CD14-positive monocyte (primary cell): ENCODE measurements at regions of chr2 and their contacts with region 1.

Region 1: GRCh38 chr2:240021488-240022104 is 3.5 kb downstream of the NDUFA10 start:
- DNase-seq: peak; percentile 51 to 65 (median 61)
- H3K4me3 ChIP-seq: no peak overlapping the region
- H3K4me3 Mint-ChIP-seq: no peak overlapping the region
- H3K27ac ChIP-seq: no peak overlapping the region
- H3K27ac Mint-ChIP-seq: peak overlapping the region in 1 of 7 donors; percentile 45
- H3K4me1 ChIP-seq: peaks cover 13 to 15% of the 10 kb centered on the region in 2 donors
- H3K4me1 Mint-ChIP-seq: peaks cover 16% of the 10 kb centered on the region
- H3K27me3 ChIP-seq: no peaks in the 10 kb centered on the region
- H3K27me3 Mint-ChIP-seq: peaks cover 0 to under 1% (median 0%) of the 10 kb centered on the region in 3 donors
- CTCF ChIP-seq: peak; percentile 84

Region 2: GRCh38 chr2:239892441-239893235 is 129.0 kb before region 1 on chr2:
- intact Hi-C with region 1: no loop called
- DNase-seq: no peak
- H3K4me3 ChIP-seq: no peak overlapping the region
- H3K4me3 Mint-ChIP-seq: no peak overlapping the region
- H3K27ac ChIP-seq: no peak overlapping the region
- H3K27ac Mint-ChIP-seq: peak overlapping the region in 3 of 7 donors; percentile 6 to 59 (median 15)
- H3K4me1 ChIP-seq: peaks cover 37 to 42% of the 10 kb centered on the region in 2 donors
- H3K4me1 Mint-ChIP-seq: peaks cover 50% of the 10 kb centered on the region
- H3K27me3 ChIP-seq: no peaks in the 10 kb centered on the region
- H3K27me3 Mint-ChIP-seq: peaks cover 5 to 15% (median 12%) of the 10 kb centered on the region in 3 donors
- CTCF ChIP-seq: no peak

Region 3: DNA sequence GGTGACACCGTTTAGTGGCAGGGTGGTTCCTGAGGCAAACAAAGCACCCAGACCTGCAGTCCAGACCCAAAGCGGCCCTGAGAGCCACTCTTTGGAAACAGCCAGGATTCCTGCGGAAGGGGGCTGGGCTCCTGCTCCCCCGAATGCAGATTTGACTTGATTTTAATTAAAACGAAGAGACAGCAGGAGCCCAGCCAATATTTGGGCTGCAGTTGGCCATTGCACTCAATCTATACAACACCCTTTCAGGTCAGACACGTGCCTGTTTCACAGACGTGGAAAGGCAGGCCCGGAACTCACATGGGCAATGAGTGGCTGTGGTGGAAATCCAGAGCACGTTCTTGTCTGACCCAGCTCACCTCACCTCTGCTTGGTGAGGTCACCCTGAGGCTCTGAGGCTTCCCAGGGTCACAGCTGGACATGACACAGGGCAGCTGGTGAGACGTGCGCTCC is 118.8 kb before region 1 on chr2:
- intact Hi-C with region 1: no loop called
- DNase-seq: no peak
- H3K4me3 ChIP-seq: no peak overlapping the region
- H3K4me3 Mint-ChIP-seq: no peak overlapping the region
- H3K27ac ChIP-seq: no peak overlapping the region
- H3K27ac Mint-ChIP-seq: no peak overlapping the region
- H3K4me1 ChIP-seq: peaks cover 1 to 4% of the 10 kb centered on the region in 2 donors
- H3K4me1 Mint-ChIP-seq: peaks cover 24% of the 10 kb centered on the region
- H3K27me3 ChIP-seq: no peaks in the 10 kb centered on the region
- H3K27me3 Mint-ChIP-seq: peaks cover 0 to 4% (median 2%) of the 10 kb centered on the region in 3 donors
- CTCF ChIP-seq: no peak

Region 4: GRCh38 chr2:239979243-239980023 is 42.2 kb before region 1 on chr2:
- intact Hi-C with region 1: loop called in 1 of 2 experiments (anchors 2 kb)
- DNase-seq: peak in 1 of 3 donors; percentile 38
- H3K4me3 ChIP-seq: no peak overlapping the region
- H3K4me3 Mint-ChIP-seq: no peak overlapping the region
- H3K27ac ChIP-seq: peak overlapping the region in 1 of 2 donors; percentile 89
- H3K27ac Mint-ChIP-seq: peak overlapping the region; percentile 92 to 98 (median 97)
- H3K4me1 ChIP-seq: peaks cover 9 to 27% of the 10 kb centered on the region in 2 donors
- H3K4me1 Mint-ChIP-seq: peaks cover 43% of the 10 kb centered on the region
- H3K27me3 ChIP-seq: no peaks in the 10 kb centered on the region
- H3K27me3 Mint-ChIP-seq: peaks cover 0 to 1% (median 0%) of the 10 kb centered on the region in 3 donors
- CTCF ChIP-seq: peak; percentile 27